ENCODE measurements at regions of chr11 and their contacts with region 1.

Region 1: DNA sequence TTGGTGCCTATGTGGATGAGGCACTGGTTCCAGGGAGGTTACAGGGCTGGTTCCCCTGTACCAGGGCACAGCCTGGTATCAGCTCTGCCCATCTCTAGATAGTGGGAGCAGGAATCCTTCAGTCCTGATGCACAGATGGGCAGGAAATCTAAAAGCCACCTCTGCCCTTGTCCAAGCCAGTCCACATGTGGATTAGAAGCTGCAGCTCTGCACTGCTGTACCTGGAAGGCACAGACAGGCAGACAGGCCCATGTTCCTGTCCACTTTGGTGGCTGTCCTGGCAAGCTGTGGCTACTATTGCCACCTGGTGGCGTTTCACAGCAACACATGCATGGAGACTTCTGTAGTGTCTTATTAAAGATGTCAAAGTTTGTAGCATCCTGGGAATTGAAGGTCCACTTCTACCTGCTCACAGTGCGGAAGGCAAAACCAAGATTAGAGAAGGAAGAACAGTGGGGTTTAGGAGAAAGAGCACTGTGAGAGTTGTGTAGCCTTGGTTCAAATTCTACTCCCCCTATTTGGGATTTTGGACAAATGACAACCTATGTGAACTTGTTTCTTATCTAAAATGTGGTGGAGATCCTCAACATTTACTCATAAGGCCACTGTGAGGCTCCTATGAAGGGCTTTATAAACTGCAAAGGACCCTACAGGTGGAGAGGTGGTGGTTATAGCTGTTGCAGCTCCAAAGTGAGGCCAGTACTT is 30.1 kb downstream of the NAV2 start:
- DNase-seq: peak; percentile 8 to 57 (median 40)
- ATAC-seq: peak; percentile 81
- H3K4me3 ChIP-seq: no peak overlapping the region
- H3K4me3 Mint-ChIP-seq: no peak overlapping the region
- H3K27ac ChIP-seq: no peak overlapping the region
- H3K27ac Mint-ChIP-seq: no peak overlapping the region
- H3K4me1 ChIP-seq: no peaks in the 10 kb centered on the region
- H3K4me1 Mint-ChIP-seq: no peaks in the 10 kb centered on the region
- H3K27me3 ChIP-seq: no peaks in the 10 kb centered on the region
- H3K27me3 Mint-ChIP-seq: peaks cover 0 to 12% (median 0%) of the 10 kb centered on the region in 5 donors

Region 2: GRCh38 chr11:19566583-19567379 is 176.0 kb before region 1 on chr11:
- CTCF ChIA-PET with region 1: interaction called, 32 read pairs
- POLR2A ChIA-PET with region 1: no interaction called
- intact Hi-C with region 1: loop called (anchors 1 kb)
- DNase-seq: no peak
- ATAC-seq: no peak
- H3K4me3 ChIP-seq: no peak overlapping the region
- H3K4me3 Mint-ChIP-seq: no peak overlapping the region
- H3K27ac ChIP-seq: no peak overlapping the region
- H3K27ac Mint-ChIP-seq: no peak overlapping the region
- H3K4me1 ChIP-seq: no peaks in the 10 kb centered on the region
- H3K4me1 Mint-ChIP-seq: no peaks in the 10 kb centered on the region
- H3K27me3 ChIP-seq: no peaks in the 10 kb centered on the region
- H3K27me3 Mint-ChIP-seq: peaks cover 2 to 34% (median 17%) of the 10 kb centered on the region in 5 donors

Region 3: DNA sequence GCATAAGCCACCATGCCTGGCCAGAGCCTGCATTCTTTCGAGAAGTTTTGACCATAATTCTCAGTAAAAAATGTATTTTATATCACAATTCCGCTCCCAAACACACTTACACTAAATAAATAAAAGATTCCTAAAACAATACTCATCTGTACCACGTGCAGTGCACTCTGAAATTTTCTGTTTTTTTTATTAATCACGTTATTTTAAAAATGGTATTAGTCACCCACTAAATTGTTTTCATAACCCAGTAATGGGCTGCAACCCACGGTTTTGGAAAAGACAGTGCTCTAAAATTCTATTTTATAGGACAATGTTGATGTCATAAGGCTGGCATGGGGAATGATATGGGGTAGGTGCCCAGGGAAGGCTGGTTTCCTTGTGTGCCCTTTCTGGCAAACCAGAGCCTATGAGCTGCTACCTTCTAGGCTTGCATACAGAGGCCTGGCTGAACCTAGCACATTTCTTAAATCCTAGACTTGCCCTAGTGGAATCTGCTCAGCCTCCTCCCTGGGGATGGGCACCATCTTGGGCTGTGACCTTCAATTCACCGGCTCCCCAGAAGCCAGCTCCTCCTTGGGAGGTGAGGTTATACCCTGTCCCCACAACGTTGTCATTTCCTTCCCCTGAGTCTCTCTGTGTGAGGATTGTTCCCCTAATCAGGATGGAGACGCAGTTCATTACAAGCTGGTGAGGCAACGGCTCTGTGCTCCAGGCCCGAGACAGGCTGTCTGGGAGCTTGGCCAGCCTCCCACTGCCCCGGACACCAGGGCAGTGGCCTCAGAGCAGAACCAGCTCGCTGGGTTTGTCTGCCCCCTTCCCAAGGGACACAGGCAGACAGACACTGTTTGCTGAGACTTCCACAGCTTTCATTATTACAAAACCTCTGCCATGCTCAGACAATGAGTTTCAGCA is 146.6 kb before region 1 on chr11:
- CTCF ChIA-PET with region 1: no interaction called
- POLR2A ChIA-PET with region 1: no interaction called
- intact Hi-C with region 1: no loop called
- DNase-seq: no peak
- ATAC-seq: no peak
- H3K4me3 ChIP-seq: no peak overlapping the region
- H3K4me3 Mint-ChIP-seq: no peak overlapping the region
- H3K27ac ChIP-seq: no peak overlapping the region
- H3K27ac Mint-ChIP-seq: no peak overlapping the region
- H3K4me1 ChIP-seq: no peaks in the 10 kb centered on the region
- H3K4me1 Mint-ChIP-seq: no peaks in the 10 kb centered on the region
- H3K27me3 ChIP-seq: no peaks in the 10 kb centered on the region
- H3K27me3 Mint-ChIP-seq: peaks cover 0 to 29% (median 21%) of the 10 kb centered on the region in 5 donors

Region 4: GRCh38 chr11:19660076-19660475 is 82.7 kb before region 1 on chr11:
- CTCF ChIA-PET with region 1: no interaction called
- POLR2A ChIA-PET with region 1: no interaction called
- intact Hi-C with region 1: no loop called
- DNase-seq: no peak
- ATAC-seq: peak; percentile 45
- H3K4me3 ChIP-seq: no peak overlapping the region
- H3K4me3 Mint-ChIP-seq: no peak overlapping the region
- H3K27ac ChIP-seq: no peak overlapping the region
- H3K27ac Mint-ChIP-seq: no peak overlapping the region
- H3K4me1 ChIP-seq: no peaks in the 10 kb centered on the region
- H3K4me1 Mint-ChIP-seq: peaks cover 0 to 4% (median 0%) of the 10 kb centered on the region in 7 donors
- H3K27me3 ChIP-seq: no peaks in the 10 kb centered on the region
- H3K27me3 Mint-ChIP-seq: peaks cover 0 to 10% (median 3%) of the 10 kb centered on the region in 5 donors